Activated CD8-positive, alpha-beta memory T cell treated with anti-CD3 and anti-CD28 coated beads, Interleukin-2, amount 10 ng/mL, durations not matched to agents 7 days and 5 days (primary cell): ENCODE measurements at regions of chr5 and their contacts with region 1.

Region 1: GRCh38 chr5:99060306-99061261 is 131.8 kb upstream of the CHD1 start:
- DNase-seq: peak; percentile 89
- ATAC-seq: peak; percentile 63
- H3K4me3 Mint-ChIP-seq: no peak overlapping the region
- H3K27ac Mint-ChIP-seq: no peak overlapping the region
- H3K4me1 Mint-ChIP-seq: peaks cover 6% of the 10 kb centered on the region
- H3K27me3 Mint-ChIP-seq: peaks cover 10% of the 10 kb centered on the region

Region 2: DNA sequence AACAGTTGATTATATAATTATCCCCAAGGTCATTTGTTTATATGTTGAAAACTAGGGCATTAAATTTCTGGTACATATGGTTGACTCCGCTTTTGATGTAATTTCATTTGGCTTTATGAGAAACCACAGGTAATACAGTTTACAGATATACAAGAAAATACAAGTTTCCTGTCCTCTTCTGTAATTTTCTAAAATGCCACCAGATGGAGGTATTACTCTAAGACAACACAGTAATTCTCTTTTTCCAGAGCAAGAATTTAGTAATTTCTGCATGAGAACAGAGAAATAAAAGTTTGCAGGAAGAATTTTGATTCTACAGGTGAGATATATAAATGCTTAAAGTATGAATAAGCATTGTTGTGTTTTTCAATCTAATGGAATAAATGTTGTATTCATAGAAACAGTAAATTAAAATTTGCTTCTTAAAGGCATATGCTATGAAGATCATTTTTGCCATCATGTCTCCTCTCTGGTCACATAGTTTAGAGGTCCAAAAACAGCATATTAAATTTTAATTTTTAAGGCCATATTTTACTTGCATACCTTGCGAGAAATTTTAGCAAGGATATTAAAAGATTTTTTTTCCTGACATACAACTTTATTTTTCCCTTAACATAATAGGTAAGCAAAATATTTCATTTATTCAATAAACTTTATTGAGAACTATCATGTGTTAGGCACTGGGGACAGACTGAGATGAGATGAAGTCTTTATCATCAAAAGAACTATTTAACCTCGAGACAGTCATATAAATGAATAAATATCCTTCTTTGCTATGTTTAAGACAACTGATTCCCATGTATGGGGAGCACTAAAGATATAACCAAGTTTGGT is 154.5 kb before region 1 on chr5:
- CTCF ChIA-PET with region 1: interaction called, 30 read pairs
- DNase-seq: no peak
- ATAC-seq: no peak
- H3K4me3 Mint-ChIP-seq: no peak overlapping the region
- H3K27ac Mint-ChIP-seq: peak overlapping the region; percentile 47
- H3K4me1 Mint-ChIP-seq: peaks cover 29% of the 10 kb centered on the region
- H3K27me3 Mint-ChIP-seq: no peaks in the 10 kb centered on the region

Region 3: GRCh38 chr5:98913911-98914310 is 146.7 kb before region 1 on chr5:
- CTCF ChIA-PET with region 1: interaction called, 11 read pairs
- DNase-seq: no peak
- ATAC-seq: peak; percentile 30
- H3K4me3 Mint-ChIP-seq: no peak overlapping the region
- H3K27ac Mint-ChIP-seq: no peak overlapping the region
- H3K4me1 Mint-ChIP-seq: peaks cover 46% of the 10 kb centered on the region
- H3K27me3 Mint-ChIP-seq: no peaks in the 10 kb centered on the region

Region 4: DNA sequence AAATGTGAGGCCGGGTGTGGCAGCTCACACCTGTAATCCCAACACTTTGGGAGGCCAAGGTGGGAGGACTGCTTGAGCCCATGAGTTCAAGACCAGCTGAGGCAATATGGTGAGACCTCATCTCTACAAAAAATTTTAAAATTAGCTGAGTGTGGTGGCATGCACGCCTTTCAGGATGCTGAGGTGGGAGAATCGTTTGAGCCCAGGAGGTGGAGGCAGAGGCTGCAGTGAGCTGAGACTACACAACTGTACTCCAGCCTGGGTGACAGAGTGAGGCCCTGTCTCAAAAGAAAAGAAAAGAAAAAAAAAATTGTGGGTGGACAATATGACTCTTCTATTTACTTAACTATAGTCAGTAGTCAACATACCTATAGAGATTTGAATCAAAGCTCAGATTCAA is 136.6 kb before region 1 on chr5:
- CTCF ChIA-PET with region 1: interaction called, 15 read pairs
- DNase-seq: no peak
- ATAC-seq: no peak
- H3K4me3 Mint-ChIP-seq: no peak overlapping the region
- H3K27ac Mint-ChIP-seq: peak overlapping the region; percentile 40
- H3K4me1 Mint-ChIP-seq: peaks cover 39% of the 10 kb centered on the region
- H3K27me3 Mint-ChIP-seq: no peaks in the 10 kb centered on the region